ENCODE measurements at regions of chr3 and their contacts with region 1.

Region 1: DNA sequence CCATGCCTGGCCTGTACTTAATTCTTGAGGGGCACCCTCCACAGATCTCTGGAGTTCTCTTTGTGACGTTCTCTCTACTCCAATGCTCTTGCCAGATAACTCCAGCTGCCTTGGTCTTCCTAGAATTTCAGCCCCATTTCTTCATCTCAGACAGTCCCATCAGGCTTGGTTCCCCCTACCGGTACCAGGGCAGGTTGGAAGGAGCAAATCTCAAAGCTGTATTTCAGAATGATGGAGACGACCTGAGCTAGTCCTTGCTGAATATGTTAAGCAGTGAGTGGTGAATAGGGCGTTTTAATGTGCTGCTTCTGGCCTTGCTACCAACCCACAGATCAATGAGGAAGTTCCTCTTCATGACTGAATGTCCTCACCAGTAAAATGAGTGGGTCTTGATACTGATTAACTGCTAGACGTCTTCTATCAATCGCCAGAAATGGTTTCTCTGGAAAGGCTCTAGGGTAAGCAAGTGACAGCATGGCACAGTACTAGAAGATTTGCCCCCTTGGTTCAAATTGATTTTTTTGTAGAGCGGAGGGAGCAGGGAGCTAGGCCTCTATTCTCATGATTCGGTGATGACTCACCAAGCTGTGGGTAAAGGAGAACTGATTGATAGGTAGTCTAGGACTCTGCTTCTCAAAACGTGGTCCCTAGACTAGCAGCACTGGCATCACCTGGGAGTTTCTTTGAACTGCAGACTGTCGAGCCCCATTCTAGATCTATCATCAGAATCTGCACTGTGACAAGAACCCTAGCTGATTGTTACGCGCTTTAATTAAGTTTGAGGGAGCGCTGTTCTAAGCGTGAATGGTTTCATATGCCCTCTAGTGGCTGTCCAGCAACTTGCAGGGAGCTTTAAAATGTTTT is 67.8 kb downstream of the UBP1 start:
- DNase-seq: peak; percentile 66
- ATAC-seq: peak; percentile 65
- H3K4me3 Mint-ChIP-seq: no peak overlapping the region
- H3K27ac Mint-ChIP-seq: no peak overlapping the region
- H3K4me1 Mint-ChIP-seq: peaks cover 3% of the 10 kb centered on the region
- H3K27me3 Mint-ChIP-seq: peaks cover 2% of the 10 kb centered on the region

Region 2: GRCh38 chr3:32934150-32934742 is 438.2 kb before region 1 on chr3:
- CTCF ChIA-PET with region 1: no interaction called
- POLR2A ChIA-PET with region 1: no interaction called
- DNase-seq: peak; percentile 41
- ATAC-seq: no peak
- H3K4me3 Mint-ChIP-seq: no peak overlapping the region
- H3K27ac Mint-ChIP-seq: peak overlapping the region; percentile 43
- H3K4me1 Mint-ChIP-seq: no peaks in the 10 kb centered on the region
- H3K27me3 Mint-ChIP-seq: peaks cover 6% of the 10 kb centered on the region

Region 3: GRCh38 chr3:32947789-32948238 is 424.6 kb before region 1 on chr3:
- CTCF ChIA-PET with region 1: interaction called, 28 read pairs
- POLR2A ChIA-PET with region 1: no interaction called
- DNase-seq: peak; percentile 94
- ATAC-seq: peak; percentile 90
- H3K4me3 Mint-ChIP-seq: no peak overlapping the region
- H3K27ac Mint-ChIP-seq: no peak overlapping the region
- H3K4me1 Mint-ChIP-seq: peaks cover 35% of the 10 kb centered on the region
- H3K27me3 Mint-ChIP-seq: peaks cover 3% of the 10 kb centered on the region

Region 4: DNA sequence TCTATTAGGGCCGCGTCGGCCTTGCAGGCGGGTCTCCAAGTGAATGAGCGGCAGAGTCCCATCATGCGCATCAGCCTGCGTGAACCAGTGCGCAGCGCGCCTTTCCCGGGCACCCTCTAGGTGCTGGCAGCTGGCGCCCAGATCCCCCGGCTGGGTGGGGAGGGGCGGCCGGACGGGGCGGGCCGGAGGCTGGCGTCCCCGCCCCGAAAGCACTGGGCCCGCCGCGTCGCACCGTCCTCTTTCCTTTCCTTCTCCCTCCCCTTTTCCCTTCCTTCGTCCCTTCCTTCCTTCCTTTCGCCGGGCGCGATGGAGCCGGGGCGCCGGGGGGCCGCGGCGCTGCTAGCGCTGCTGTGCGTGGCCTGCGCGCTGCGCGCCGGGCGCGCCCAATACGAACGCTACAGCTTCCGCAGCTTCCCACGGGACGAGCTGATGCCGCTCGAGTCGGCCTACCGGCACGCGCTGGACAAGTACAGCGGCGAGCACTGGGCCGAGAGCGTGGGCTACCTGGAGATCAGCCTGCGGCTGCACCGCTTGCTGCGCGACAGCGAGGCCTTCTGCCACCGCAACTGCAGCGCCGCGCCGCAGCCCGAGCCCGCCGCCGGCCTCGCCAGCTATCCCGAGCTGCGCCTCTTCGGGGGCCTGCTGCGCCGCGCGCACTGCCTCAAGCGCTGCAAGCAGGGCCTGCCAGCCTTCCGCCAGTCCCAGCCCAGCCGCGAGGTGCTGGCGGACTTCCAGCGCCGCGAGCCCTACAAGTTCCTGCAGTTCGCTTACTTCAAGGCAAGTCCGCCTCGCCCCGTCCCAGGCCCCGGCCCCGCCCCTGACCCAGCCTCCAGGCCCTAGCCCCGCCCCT is 258.5 kb before region 1 on chr3 and contains the start of gene CRTAP:
- CTCF ChIA-PET with region 1: interaction called, 13 read pairs
- POLR2A ChIA-PET with region 1: no interaction called
- DNase-seq: peak; percentile 86
- ATAC-seq: peak; percentile 93
- H3K4me3 Mint-ChIP-seq: peak within 1 kb of the TSS; percentile 84
- H3K27ac Mint-ChIP-seq: peak within 1 kb of the TSS; percentile 80
- H3K4me1 Mint-ChIP-seq: peaks cover 20% of the 10 kb centered on the region
- H3K27me3 Mint-ChIP-seq: peaks cover 3% of the 10 kb centered on the region
- total RNA-seq, gene CRTAP: 21.2 to 22.5 TPM

Region 5: GRCh38 chr3:33131331-33132018 is 241.0 kb before region 1 on chr3:
- CTCF ChIA-PET with region 1: interaction called, 153 read pairs
- POLR2A ChIA-PET with region 1: interaction called, 4 read pairs
- DNase-seq: peak; percentile 60
- ATAC-seq: peak; percentile 64
- H3K4me3 Mint-ChIP-seq: no peak overlapping the region
- H3K27ac Mint-ChIP-seq: no peak overlapping the region
- H3K4me1 Mint-ChIP-seq: peaks cover 12% of the 10 kb centered on the region
- H3K27me3 Mint-ChIP-seq: no peaks in the 10 kb centered on the region

Region 6: DNA sequence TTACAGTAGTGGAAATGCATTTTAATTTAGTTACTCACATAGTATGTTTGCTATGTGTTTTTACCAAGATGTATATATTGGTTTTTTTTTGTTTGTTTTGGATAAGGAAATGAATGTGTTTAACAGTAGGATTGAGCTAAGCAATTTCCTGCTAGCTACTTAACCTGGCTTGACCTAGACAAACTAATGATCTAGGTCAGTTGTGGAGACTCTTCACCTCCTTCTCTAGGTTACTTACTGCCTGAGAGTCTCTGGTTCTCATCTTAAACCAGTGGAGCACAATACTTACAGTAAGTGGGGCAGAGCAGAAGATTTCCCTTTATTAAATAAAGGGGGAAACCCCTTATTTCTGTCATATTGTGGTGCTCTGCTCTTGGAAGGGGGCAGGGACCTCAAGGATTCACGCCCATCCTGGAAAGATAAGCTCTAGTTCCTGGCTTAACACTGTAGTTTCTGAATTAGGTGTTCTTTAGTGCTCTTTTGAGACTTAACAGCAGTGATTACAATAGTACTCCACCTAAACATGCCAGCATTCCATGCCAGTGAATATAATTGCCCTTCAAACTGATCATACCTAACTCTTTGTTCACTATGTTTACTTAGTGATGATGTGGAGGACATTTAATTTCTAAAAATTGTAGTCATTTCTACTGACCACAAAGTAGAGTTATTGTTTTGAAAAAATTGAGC is 12.2 kb before region 1 on chr3:
- CTCF ChIA-PET with region 1: interaction called, 29 read pairs
- POLR2A ChIA-PET with region 1: no interaction called
- DNase-seq: no peak
- ATAC-seq: no peak
- H3K4me3 Mint-ChIP-seq: no peak overlapping the region
- H3K27ac Mint-ChIP-seq: no peak overlapping the region
- H3K4me1 Mint-ChIP-seq: no peaks in the 10 kb centered on the region
- H3K27me3 Mint-ChIP-seq: peaks cover 17% of the 10 kb centered on the region

Region 7: DNA sequence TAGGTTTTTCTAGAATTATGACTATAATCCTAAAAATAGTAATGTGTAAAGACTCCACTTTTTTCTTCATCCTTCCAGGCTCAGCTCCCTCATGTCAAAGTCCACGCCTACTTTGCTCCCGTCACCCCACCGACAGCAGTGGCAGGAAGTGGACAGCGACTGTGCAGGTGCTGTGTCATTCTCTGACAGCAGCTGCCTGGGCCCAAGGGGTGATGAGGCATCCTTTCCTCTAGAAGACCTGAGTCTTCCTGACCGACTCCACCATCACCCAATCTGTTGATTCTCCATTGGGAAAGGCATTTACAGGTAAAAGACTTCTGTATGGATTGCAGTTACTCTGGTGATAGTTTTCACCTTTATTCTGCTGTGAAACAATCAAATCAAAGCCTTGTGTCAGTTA is 13.0 kb after region 1 on chr3:
- CTCF ChIA-PET with region 1: interaction called, 40 read pairs
- POLR2A ChIA-PET with region 1: no interaction called
- DNase-seq: peak; percentile 72
- ATAC-seq: peak; percentile 86
- H3K4me3 Mint-ChIP-seq: no peak overlapping the region
- H3K27ac Mint-ChIP-seq: peak overlapping the region; percentile 63
- H3K4me1 Mint-ChIP-seq: peaks cover 18% of the 10 kb centered on the region
- H3K27me3 Mint-ChIP-seq: no peaks in the 10 kb centered on the region

Region 8: DNA sequence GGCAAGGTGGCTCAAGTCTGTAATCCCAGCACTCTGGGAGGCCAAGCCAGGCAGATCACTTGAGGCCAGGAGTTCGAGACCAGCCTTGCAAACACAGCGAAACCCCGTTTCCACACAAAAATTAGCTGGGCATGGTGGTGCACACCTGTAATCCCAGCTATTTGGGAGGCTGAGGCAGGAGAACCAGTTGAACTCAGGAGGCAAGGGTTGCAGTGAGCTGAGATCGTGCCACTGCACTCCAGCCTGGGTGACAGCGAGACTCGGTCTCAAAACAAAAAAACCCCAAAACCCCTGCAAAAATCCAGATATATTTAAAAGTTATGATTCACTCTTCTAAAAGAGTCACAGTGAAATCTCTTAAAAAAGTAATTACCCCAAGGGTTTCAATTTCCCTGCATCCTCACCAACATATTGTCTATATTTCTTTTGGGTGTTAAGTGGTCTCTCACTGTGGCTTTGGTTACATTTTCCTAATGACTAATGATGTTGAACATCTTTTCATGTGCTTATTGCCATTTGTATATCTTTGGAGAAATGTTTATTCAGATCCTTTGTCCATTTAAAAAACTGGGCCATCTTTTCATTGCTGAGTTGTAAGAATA is 140.9 kb after region 1 on chr3:
- CTCF ChIA-PET with region 1: no interaction called
- POLR2A ChIA-PET with region 1: no interaction called
- DNase-seq: no peak
- ATAC-seq: no peak
- H3K4me3 Mint-ChIP-seq: no peak overlapping the region
- H3K27ac Mint-ChIP-seq: no peak overlapping the region
- H3K4me1 Mint-ChIP-seq: no peaks in the 10 kb centered on the region
- H3K27me3 Mint-ChIP-seq: no peaks in the 10 kb centered on the region

Region 9: GRCh38 chr3:33575311-33575710 is 202.9 kb after region 1 on chr3:
- CTCF ChIA-PET with region 1: no interaction called
- POLR2A ChIA-PET with region 1: no interaction called
- DNase-seq: no peak
- ATAC-seq: no peak
- H3K4me3 Mint-ChIP-seq: no peak overlapping the region
- H3K27ac Mint-ChIP-seq: no peak overlapping the region
- H3K4me1 Mint-ChIP-seq: no peaks in the 10 kb centered on the region
- H3K27me3 Mint-ChIP-seq: no peaks in the 10 kb centered on the region